ENCODE measurements at regions of chr5 and their contacts with region 1.

Region 1: DNA sequence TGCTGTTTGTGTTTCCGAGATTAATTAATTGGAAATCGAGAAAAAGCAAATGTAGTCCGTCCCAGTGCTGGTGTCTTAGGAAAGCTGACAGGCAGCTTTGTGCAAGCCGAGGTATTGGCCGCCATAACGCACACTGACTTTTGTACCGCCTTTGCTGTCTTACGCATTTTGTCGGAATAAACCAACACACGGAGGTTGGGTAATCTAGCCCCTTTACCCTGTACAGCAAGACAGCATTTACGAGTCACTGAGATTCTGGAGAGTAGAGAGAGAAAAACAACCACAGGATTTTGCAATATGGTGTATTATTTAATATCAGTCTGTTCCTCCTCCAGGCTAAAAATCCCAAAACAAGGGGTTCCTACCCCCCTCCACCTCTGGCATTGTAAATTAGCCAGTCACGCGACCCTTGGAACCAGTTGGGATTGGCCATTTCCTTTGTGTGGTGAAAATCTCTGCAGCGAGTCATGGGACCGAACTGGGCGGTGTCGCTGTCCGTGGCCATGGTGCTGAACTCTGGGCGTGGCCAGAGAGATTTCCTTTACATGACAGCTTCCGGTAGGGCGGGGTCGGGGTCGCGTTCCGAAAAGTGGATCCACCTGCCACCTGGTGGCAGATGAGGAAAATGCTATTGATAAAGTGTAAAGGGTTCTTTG is 10.3 kb upstream of the PCDHB1 start:
- DNase-seq: peak; percentile 95
- ATAC-seq: peak; percentile 99
- H3K4me3 ChIP-seq: peak overlapping the region; percentile 47
- H3K27ac ChIP-seq: peak overlapping the region; percentile 76
- H3K4me1 ChIP-seq: no peaks in the 10 kb centered on the region
- H3K27me3 ChIP-seq: no peaks in the 10 kb centered on the region
- CTCF ChIP-seq: peak; percentile 70

Region 2: DNA sequence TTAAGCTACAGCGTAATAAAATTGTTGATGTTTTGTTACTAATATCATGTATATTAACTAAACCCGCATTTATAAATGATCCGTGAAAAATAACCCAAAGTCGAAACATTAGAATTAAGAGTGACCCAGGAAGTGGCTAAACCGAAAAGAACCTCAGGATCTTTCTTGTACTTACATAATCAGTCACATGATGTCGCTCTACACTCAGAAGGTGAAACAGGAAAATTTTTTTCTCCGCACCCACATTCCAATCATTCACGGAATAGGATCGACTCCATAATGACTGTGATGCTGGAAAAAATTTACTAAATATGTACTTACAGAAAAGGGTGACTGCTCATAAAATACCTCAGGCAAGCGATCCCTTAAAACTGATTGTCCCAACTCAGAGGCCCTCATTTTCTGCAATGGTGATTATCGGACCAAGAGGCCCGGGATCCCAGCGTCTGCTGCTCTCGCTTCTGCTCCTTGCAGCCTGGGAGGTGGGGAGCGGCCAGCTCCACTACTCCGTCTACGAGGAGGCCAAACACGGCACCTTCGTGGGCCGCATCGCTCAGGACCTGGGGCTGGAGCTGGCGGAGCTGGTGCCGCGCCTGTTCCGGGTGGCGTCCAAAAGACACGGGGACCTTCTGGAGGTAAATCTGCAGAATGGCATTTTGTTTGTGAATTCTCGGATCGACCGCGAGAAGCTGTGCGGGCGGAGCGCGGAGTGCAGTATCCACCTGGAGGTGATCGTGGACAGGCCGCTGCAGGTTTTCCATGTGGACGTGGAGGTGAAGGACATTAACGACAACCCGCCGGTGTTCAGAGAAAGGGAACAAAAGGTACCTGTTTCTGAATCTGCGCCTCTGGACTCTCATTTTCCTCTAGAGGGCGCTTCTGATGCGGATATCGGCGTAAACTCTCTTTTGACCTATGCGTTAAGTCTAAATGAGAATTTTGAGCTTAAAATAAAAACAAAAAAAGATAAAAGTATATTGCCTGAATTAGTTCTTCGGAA is 165.5 kb before region 1 on chr5 and contains the start of gene PCDHA12:
- intact Hi-C with region 1: loop called (anchors 10 kb)
- DNase-seq: no peak
- ATAC-seq: peak; percentile 78
- H3K4me3 ChIP-seq: peak within 1 kb of the TSS; percentile 26
- H3K27ac ChIP-seq: no peak within 1 kb of the TSS
- H3K4me1 ChIP-seq: no peaks in the 10 kb centered on the region
- H3K27me3 ChIP-seq: peaks cover 12% of the 10 kb centered on the region
- CTCF ChIP-seq: peak; percentile 20
- total RNA-seq, gene PCDHA12: 8.8 TPM

Region 3: GRCh38 chr5:141543053-141543452 is 502.2 kb after region 1 on chr5:
- intact Hi-C with region 1: no loop called
- DNase-seq: no peak
- ATAC-seq: no peak
- H3K4me3 ChIP-seq: no peak overlapping the region
- H3K27ac ChIP-seq: no peak overlapping the region
- H3K4me1 ChIP-seq: no peaks in the 10 kb centered on the region
- H3K27me3 ChIP-seq: no peaks in the 10 kb centered on the region
- CTCF ChIP-seq: no peak

Measured in upper lobe of right lung (tissue), 1 donor.